Gastrocnemius medialis (tissue), 4 donors: ENCODE measurements at regions of chrX and their contacts with region 1.

Region 1: DNA sequence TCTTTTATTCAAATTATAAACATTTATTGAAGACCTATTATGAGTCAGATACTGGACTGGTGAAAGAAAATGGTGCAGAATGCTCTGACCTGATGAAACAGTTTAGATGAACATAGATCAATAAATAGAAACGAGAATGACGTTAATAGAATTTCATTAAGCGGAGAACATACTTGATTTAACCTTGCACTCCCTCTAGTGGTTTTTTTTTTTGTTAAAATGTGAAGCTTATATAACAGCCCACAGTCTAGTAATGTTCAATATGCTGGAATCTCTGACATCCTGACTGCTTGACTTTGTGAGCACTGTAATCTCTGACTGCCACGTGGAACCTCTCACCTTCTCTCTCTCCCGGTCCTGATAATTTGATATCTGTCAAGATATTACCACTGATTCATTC is 32.3 kb downstream of the HDAC8 start:
- DNase-seq: no peak
- ATAC-seq: no peak
- H3K4me3 ChIP-seq: no peak overlapping the region
- H3K27ac ChIP-seq: no peak overlapping the region
- H3K4me1 ChIP-seq: peaks cover 0 to 13% of the 10 kb centered on the region in 2 donors
- H3K27me3 ChIP-seq: no peaks in the 10 kb centered on the region
- CTCF ChIP-seq: peak in 3 of 5 experiments; percentile 16 to 35 (median 30)
- POLR2A ChIP-seq: no peak

Region 2: DNA sequence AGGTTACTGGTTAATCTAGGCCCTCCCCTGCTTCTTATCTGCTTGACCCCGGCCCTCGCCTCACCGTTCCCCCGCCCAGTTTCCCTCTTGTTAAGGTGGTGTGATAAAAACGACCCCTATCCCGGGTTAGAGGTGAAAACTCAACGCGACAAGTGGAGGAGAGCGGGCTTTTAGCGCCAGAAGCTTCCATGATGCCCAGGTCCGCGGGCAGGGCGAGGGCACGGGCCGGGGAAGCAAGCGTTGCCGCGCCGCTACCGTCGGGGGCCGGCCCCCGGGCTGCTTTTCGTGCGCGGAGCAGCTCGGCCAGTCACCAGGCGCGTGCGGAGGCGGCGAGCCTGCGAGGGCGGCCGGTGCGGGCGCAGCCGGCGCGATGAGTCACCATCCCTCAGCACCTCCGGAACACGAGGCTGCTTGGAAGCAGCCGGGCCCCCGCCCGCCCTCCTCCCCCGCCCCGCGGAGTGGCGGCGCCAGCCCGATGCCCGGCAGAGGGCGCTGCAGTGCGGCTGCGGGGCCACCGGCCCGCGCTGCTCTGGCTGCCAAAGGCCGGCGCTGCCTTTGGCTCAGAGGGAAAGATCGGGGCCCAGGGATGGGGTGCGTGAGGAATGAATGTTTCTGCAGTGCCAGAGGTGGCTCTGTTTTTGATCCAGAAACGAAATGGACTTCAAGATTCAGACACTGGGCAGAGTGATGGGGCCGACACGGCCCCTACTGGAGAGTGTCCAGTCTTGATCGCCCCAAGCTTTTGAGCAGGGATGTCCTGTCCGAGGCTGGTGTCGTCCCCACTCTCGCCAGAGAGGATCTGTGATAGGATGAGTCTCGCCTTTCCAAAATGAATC is 521.8 kb before region 1 on chrX:
- in situ Hi-C with region 1: loop called in 1 of 4 experiments (anchors 25 kb)
- intact Hi-C with region 1: no loop called
- DNase-seq: peak; percentile 70 to 86
- ATAC-seq: peak; percentile 94
- H3K4me3 ChIP-seq: peak overlapping the region in 3 of 4 donors; percentile 24 to 47 (median 46)
- H3K27ac ChIP-seq: peak overlapping the region; percentile 42 to 74 (median 66)
- H3K4me1 ChIP-seq: no peaks in the 10 kb centered on the region
- H3K27me3 ChIP-seq: peaks cover 0 to 6% (median 0%) of the 10 kb centered on the region in 3 donors
- CTCF ChIP-seq: peak; percentile 32 to 91 (median 74)
- POLR2A ChIP-seq: no peak

Region 3: DNA sequence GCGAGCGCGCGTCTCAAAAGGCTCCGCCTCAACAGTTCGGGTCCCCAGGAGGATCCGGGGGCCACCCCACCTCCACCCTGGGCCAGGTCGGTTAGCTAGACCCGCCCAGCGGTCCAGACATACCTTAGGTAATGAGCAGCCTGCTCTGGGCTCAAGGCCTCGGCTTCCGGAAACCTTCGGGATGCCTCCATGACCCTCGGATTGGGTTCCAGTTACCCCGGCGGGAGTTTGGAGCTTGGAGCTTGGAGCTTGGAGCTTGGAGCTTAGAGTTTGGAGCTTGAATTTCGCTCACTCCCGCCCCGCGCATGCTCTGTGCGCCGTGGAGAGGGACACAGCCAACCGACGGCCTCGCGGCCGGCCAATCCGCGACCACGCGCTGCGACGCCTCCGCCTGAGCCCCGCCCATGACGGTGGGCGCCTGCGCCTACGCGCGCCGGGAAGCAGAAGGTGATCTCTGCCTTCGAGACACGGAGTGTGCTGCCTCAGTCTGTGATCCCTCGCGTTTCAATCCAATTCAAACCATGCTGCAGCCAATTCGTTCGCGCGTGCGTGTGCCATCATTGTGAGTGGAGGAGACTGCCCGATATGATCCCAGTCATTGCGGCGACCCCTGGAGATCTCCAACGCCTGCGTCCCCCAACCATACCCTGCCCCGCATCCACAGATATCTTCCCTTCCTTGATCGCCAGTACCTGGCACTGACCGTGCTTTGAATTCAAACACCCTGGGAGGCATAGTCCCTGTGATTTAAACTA is 301.4 kb before region 1 on chrX and contains the start of gene ERCC6L:
- in situ Hi-C with region 1: loop called in 1 of 4 experiments (anchors 25 kb)
- intact Hi-C with region 1: loop called (anchors 10 kb)
- DNase-seq: peak; percentile 60 to 78
- ATAC-seq: peak; percentile 89 to 94
- H3K4me3 ChIP-seq: peak within 1 kb of the TSS; percentile 39 to 53 (median 44)
- H3K27ac ChIP-seq: peak within 1 kb of the TSS in 3 of 4 donors; percentile 50 to 55 (median 53)
- H3K4me1 ChIP-seq: no peaks in the 10 kb centered on the region
- H3K27me3 ChIP-seq: no peaks in the 10 kb centered on the region
- CTCF ChIP-seq: no peak
- POLR2A ChIP-seq: no peak
- total RNA-seq, gene ERCC6L: 0.07 TPM in 1 of 4 donors, not detected in the others

Region 4: GRCh38 chrX:72245461-72246089 is 294.7 kb before region 1 on chrX:
- in situ Hi-C with region 1: loop called in 1 of 4 experiments (anchors 25 kb)
- intact Hi-C with region 1: loop called (anchors 10 kb)
- DNase-seq: peak in 1 of 2 donors; percentile 15
- ATAC-seq: peak in 1 of 2 donors; percentile 44
- H3K4me3 ChIP-seq: no peak overlapping the region
- H3K27ac ChIP-seq: no peak overlapping the region
- H3K4me1 ChIP-seq: no peaks in the 10 kb centered on the region
- H3K27me3 ChIP-seq: no peaks in the 10 kb centered on the region
- CTCF ChIP-seq: peak; percentile 34 to 60 (median 49)
- POLR2A ChIP-seq: no peak

Region 5: GRCh38 chrX:72297953-72298730 is 242.2 kb before region 1 on chrX:
- in situ Hi-C with region 1: loop called in 1 of 4 experiments (anchors 25 kb)
- intact Hi-C with region 1: no loop called
- DNase-seq: no peak
- ATAC-seq: no peak
- H3K4me3 ChIP-seq: no peak overlapping the region
- H3K27ac ChIP-seq: no peak overlapping the region
- H3K4me1 ChIP-seq: no peaks in the 10 kb centered on the region
- H3K27me3 ChIP-seq: peaks cover 0 to 25% (median 0%) of the 10 kb centered on the region in 3 donors
- CTCF ChIP-seq: no peak
- POLR2A ChIP-seq: no peak

Region 6: GRCh38 chrX:72492499-72492898 is 47.8 kb before region 1 on chrX:
- in situ Hi-C with region 1: no loop called
- intact Hi-C with region 1: no loop called
- DNase-seq: no peak
- ATAC-seq: no peak
- H3K4me3 ChIP-seq: no peak overlapping the region
- H3K27ac ChIP-seq: no peak overlapping the region
- H3K4me1 ChIP-seq: no peaks in the 10 kb centered on the region
- H3K27me3 ChIP-seq: no peaks in the 10 kb centered on the region
- CTCF ChIP-seq: no peak
- POLR2A ChIP-seq: no peak